GM12878 (cell line): ENCODE measurements at regions of chr1 and their contacts with region 1.

Region 1: DNA sequence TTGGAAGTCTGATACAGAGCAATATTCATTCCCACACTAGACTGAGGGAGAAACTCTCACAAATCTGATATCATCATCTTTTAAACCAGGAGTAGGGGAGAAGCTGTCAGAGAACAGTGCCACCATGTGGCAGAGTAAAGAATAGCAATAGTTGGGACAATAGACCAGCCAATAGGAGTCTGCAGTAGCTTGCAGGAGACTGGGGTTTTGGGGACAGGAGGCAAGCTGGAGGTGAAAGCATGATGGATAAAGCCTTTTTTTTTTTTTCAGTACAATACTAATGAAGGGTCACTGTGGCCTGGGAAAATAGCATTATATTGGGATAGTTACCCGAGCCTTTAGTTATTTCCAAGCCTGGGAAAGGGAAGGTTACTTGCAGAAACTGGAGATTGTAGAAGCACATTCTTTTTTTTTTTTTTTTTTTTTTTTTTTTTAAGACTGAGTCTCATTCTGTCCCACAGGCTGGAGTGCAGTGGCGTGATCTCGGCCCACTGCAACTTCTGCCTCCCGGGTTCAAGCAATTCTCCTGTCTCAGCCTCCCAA is 120.7 kb downstream of the S1PR1 start:
- DNase-seq: peak; percentile 95
- ATAC-seq: peak; percentile 99
- H3K4me3 ChIP-seq: no peak overlapping the region
- H3K27ac ChIP-seq: peak overlapping the region; percentile 75
- H3K4me1 ChIP-seq: peaks cover 7% of the 10 kb centered on the region; the same call in 1 of the 2 replicates
- H3K27me3 ChIP-seq: no peaks in the 10 kb centered on the region
- CTCF ChIP-seq: peak; percentile 79 to 92 (median 89)
- EP300 ChIP-seq: no peak
- POLR2A ChIP-seq: no peak
- RAD21 ChIP-seq: peak; percentile 93

Region 2: DNA sequence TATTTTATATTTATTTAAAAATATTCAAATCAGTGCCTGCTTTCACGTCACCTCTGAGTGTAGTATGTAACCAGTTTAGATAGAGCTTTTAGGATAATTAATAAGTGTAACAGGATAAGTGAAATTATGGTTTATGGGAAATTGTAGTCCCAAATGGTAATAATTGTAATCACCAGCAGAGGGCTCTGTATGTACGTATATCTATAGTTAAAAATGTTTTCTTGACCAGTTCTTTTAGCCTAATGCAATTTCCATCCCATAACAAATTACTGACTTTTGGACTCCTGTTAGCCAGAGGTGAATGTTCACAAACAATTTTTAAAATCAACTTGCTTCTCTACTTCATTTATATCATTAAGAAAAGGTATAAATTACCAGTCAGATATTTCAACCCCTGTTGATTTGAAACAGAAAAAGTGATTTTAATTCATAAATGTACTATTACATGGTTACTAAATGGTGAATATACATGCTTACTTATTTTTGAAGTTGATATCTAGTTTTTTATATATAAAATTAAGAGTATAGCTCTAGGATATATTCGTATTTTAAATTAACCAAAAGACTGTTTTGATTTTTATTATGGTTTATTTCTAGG is 436.3 kb before region 1 on chr1:
- CTCF ChIA-PET with region 1: interaction called, 9 read pairs
- POLR2A ChIA-PET with region 1: no interaction called
- RAD21 ChIA-PET with region 1: interaction called, 5 read pairs
- SMC1A ChIA-PET with region 1: interaction called, 10 read pairs
- in situ Hi-C with region 1: no loop called
- intact Hi-C with region 1: loop called (anchors 1 kb)
- DNase-seq: no peak
- ATAC-seq: peak; percentile 59
- H3K4me3 ChIP-seq: no peak overlapping the region
- H3K27ac ChIP-seq: no peak overlapping the region
- H3K4me1 ChIP-seq: no peaks in the 10 kb centered on the region
- H3K27me3 ChIP-seq: no peaks in the 10 kb centered on the region
- CTCF ChIP-seq: peak; percentile 39 to 63 (median 39); a peak in 5 of 6 replicates
- EP300 ChIP-seq: no peak
- POLR2A ChIP-seq: no peak
- RAD21 ChIP-seq: peak; percentile 70

Region 3: DNA sequence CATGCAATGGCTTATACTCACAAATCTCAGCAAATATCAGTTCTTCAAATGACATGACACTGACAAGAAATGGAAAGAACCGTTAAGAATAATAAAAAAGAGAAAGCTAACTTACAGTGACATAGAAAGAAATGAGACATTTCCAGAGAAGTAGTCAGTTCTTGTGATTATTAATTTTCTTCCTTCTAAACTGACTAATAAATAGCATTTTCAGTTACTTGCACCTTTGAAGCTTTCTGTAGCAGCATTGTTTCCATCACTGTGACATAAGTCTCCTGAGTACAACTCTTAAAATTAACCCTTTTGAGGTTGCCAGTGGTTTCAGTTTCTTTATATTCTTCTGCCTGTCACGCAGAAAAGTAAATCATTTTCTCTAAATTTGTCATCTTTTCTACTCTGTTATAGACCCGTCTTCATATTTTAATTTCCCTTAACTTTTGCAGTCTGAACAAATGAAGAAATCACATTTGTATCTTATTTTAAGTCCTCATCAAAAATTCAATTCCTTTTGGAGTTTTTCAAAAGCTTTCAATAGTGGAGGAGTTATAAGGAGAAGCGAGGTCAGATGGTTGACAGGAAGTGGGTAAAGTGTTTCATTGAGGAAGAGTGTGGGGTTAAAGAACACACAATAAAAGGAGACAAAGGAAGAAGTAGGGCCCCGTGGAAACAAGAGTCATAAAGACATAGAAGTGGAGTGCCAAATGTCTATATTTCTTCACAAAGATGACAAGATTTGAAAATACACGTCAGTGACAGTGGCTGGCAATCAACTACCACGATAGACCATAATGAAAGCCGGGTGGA is 178.6 kb before region 1 on chr1:
- CTCF ChIA-PET with region 1: no interaction called
- POLR2A ChIA-PET with region 1: no interaction called
- RAD21 ChIA-PET with region 1: interaction called, 4 read pairs
- SMC1A ChIA-PET with region 1: no interaction called
- in situ Hi-C with region 1: no loop called
- intact Hi-C with region 1: loop called (anchors 1 kb)
- DNase-seq: peak; percentile 80
- ATAC-seq: peak; percentile 88
- H3K4me3 ChIP-seq: peak overlapping the region; percentile 32; the same call in 1 of the 2 replicates
- H3K27ac ChIP-seq: peak overlapping the region; percentile 94
- H3K4me1 ChIP-seq: peaks cover 16% of the 10 kb centered on the region
- H3K27me3 ChIP-seq: no peaks in the 10 kb centered on the region
- CTCF ChIP-seq: no peak
- EP300 ChIP-seq: peak; percentile 90 to 95
- POLR2A ChIP-seq: no peak
- RAD21 ChIP-seq: peak; percentile 15; the same call in 1 of the 2 replicates

Region 4: DNA sequence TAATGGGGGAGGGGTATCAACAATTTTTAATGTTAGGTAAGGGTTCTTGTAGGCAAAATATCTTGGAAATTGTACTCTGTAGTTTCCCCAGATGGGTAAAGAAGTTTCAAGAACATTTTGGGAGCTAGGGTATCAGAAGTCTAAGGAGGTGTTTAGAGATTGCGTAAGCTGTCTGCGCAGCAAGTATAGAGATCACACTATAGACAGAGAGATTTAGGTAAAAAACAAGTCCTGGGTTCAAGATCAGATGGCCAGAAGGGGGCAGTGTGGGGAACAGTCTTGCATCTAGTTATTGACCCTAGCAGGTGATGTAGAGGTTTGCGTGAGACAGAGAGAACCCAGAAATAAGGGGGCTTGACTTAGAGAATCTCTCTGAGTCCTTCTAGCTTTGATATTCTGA is 39.9 kb before region 1 on chr1:
- CTCF ChIA-PET with region 1: interaction called, 118 read pairs
- POLR2A ChIA-PET with region 1: interaction called, 9 read pairs
- RAD21 ChIA-PET with region 1: interaction called, 181 read pairs
- SMC1A ChIA-PET with region 1: interaction called, 95 read pairs
- in situ Hi-C with region 1: loop called (anchors 5 kb)
- intact Hi-C with region 1: no loop called
- DNase-seq: no peak
- ATAC-seq: no peak
- H3K4me3 ChIP-seq: no peak overlapping the region
- H3K27ac ChIP-seq: no peak overlapping the region
- H3K4me1 ChIP-seq: peaks cover 12% of the 10 kb centered on the region
- H3K27me3 ChIP-seq: no peaks in the 10 kb centered on the region
- CTCF ChIP-seq: 0 out of 6 replicates have a peak, but pooled peaks of 2 of the 3 experiments have one; percentile 7 to 17
- EP300 ChIP-seq: no peak
- POLR2A ChIP-seq: no peak
- RAD21 ChIP-seq: peak; percentile 22; the same call in 1 of the 2 replicates

Region 5: DNA sequence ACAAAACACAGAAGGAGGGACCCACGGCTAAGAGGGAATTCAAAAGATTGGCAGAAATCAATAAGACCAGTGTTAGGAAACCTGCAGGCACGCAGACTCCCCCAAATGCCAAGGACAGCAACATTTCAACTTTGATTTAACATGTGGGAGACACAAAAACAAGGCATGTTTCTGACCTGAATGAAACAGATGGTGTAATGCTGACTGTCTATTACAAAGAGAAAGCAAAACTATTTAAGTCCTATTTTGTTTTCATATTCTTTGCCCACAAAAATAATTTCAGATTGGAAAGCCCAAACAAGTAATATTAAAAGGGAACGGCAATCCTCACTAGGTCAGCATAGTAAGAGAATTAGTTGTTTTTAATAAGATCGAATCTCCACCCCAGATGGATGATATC is 12.8 kb before region 1 on chr1:
- CTCF ChIA-PET with region 1: interaction called, 13 read pairs
- POLR2A ChIA-PET with region 1: interaction called, 3 read pairs
- RAD21 ChIA-PET with region 1: interaction called, 8 read pairs
- SMC1A ChIA-PET with region 1: interaction called, 13 read pairs
- in situ Hi-C with region 1: no loop called
- intact Hi-C with region 1: no loop called
- DNase-seq: no peak
- ATAC-seq: peak; percentile 65; the same call in 2 of the 3 replicates
- H3K4me3 ChIP-seq: no peak overlapping the region
- H3K27ac ChIP-seq: no peak overlapping the region
- H3K4me1 ChIP-seq: no peaks in the 10 kb centered on the region
- H3K27me3 ChIP-seq: no peaks in the 10 kb centered on the region
- CTCF ChIP-seq: no peak
- EP300 ChIP-seq: no peak
- POLR2A ChIP-seq: no peak
- RAD21 ChIP-seq: no peak

Region 6: DNA sequence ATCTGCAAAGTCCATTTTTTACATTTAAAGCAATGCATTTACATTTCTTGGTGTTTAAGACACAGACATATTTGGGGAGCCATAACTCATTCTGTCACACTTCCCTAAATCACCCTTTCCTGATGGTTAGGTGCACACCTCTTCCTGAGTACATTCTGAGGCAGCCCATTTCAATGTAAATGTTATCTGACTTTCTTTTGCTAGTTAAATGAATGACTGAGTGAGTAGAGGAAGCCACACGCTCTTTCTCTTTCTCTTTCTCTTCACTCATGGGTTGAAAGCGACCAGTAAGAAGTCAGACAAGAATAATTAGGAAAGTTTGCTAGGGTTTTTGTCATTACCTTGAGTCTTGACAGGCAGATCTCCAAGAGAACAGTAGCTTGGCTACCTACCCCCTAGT is 22.4 kb after region 1 on chr1:
- CTCF ChIA-PET with region 1: interaction called, 35 read pairs
- POLR2A ChIA-PET with region 1: interaction called, 6 read pairs
- RAD21 ChIA-PET with region 1: interaction called, 26 read pairs
- SMC1A ChIA-PET with region 1: interaction called, 618 read pairs
- in situ Hi-C with region 1: no loop called
- intact Hi-C with region 1: no loop called
- DNase-seq: peak; percentile 80
- ATAC-seq: peak; percentile 95
- H3K4me3 ChIP-seq: 0 out of 2 replicates have a peak overlapping the region, but pooled peaks have one; percentile 16
- H3K27ac ChIP-seq: peak overlapping the region; percentile 91
- H3K4me1 ChIP-seq: peaks cover 32% of the 10 kb centered on the region
- H3K27me3 ChIP-seq: no peaks in the 10 kb centered on the region
- CTCF ChIP-seq: no peak
- EP300 ChIP-seq: no peak
- POLR2A ChIP-seq: no peak
- RAD21 ChIP-seq: 0 out of 2 replicates have a peak, but pooled peaks have one; percentile 2

Region 7: GRCh38 chr1:101509370-101509769 is 151.9 kb after region 1 on chr1:
- CTCF ChIA-PET with region 1: no interaction called
- POLR2A ChIA-PET with region 1: no interaction called
- RAD21 ChIA-PET with region 1: no interaction called
- SMC1A ChIA-PET with region 1: no interaction called
- in situ Hi-C with region 1: no loop called
- intact Hi-C with region 1: no loop called
- DNase-seq: no peak
- ATAC-seq: no peak
- H3K4me3 ChIP-seq: no peak overlapping the region
- H3K27ac ChIP-seq: no peak overlapping the region
- H3K4me1 ChIP-seq: no peaks in the 10 kb centered on the region
- H3K27me3 ChIP-seq: no peaks in the 10 kb centered on the region
- CTCF ChIP-seq: no peak
- EP300 ChIP-seq: no peak
- POLR2A ChIP-seq: no peak
- RAD21 ChIP-seq: no peak